MCF 10A (cell line): ENCODE measurements at regions of chr9 and their contacts with region 1.

Region 1: DNA sequence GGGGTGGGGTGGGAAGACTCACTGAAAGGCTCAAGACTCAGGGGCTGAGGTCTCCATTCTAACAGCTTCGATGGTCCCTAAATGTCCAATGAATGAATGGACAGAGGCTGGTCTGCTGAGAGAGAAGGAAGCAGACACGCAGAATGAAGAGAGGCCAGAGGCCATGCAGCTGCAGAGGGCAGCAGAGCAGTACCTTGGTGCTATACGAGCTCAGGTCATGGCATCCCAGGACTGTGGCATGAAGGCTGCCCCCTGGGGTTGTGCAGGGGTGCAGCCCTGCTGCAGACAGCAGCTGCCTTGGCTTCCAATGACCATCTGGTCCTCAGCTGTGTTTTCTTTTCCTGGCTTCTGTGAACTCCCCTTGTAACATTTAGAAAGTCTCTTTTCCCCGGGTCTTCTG is 15.2 kb upstream of the CORO2A start:
- DNase-seq: no peak
- H3K4me3 Mint-ChIP-seq: no peak overlapping the region
- H3K27ac Mint-ChIP-seq: peak overlapping the region; percentile 39
- H3K4me1 Mint-ChIP-seq: no peaks in the 10 kb centered on the region
- H3K27me3 Mint-ChIP-seq: no peaks in the 10 kb centered on the region
- CTCF ChIP-seq: no peak

Region 2: DNA sequence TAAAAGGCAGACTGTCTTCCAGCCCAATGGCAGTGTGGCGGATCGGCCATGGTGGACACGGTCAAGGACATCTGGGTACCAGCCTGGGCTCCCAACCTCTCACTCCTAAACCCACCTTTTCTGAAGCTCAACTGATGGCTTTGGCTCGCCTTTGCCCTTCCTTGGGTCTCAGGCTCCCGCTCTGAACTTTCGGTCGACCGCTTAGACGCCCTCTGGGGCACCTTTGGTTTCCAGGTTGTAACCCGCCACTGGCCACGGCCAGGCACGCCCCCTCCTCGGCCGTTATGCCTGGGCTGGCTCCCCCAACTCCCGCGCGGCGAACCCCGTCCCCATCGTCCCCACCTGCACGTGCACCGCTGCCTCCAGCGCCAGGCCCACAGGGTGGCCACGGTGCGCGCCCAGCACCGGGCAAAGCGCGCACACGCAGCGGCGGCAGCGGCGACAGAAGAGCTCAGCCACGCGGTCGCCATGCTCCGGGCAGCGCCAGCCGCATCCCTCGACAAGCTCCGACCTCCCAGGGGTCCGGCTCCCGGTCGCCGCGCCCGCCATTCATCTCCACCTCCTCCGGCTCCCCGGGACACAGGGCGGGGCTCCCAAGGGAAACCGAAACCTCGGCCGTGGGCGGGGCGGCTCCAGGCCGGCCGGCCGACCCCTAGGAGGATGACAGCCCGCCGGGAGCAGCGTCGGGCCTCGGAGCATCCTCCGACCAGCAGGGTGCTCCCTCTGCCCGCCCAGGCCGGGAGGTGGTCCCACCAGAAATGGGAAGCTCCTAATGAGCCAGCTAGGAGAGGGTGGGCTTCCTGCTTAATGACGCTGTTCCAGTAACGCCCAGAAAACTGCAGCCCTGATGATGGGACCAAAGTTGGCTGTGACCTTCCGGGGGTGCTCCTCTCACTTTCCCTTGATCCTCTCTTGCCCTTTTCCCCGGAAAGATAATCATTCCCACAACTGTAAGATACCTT is 88.7 kb before region 1 on chr9 and contains the start of gene TRIM14:
- CTCF ChIA-PET with region 1: interaction called, 16 read pairs
- POLR2A ChIA-PET with region 1: interaction called, 3 read pairs
- intact Hi-C with region 1: no loop called
- DNase-seq: peak; percentile 70
- H3K4me3 Mint-ChIP-seq: peak within 1 kb of the TSS; percentile 74
- H3K27ac Mint-ChIP-seq: peak within 1 kb of the TSS; percentile 34
- H3K4me1 Mint-ChIP-seq: peaks cover 22% of the 10 kb centered on the region
- H3K27me3 Mint-ChIP-seq: no peaks in the 10 kb centered on the region
- CTCF ChIP-seq: no peak
- total RNA-seq, gene TRIM14: 15.8 and 17.9 TPM in 2 replicates

Region 3: DNA sequence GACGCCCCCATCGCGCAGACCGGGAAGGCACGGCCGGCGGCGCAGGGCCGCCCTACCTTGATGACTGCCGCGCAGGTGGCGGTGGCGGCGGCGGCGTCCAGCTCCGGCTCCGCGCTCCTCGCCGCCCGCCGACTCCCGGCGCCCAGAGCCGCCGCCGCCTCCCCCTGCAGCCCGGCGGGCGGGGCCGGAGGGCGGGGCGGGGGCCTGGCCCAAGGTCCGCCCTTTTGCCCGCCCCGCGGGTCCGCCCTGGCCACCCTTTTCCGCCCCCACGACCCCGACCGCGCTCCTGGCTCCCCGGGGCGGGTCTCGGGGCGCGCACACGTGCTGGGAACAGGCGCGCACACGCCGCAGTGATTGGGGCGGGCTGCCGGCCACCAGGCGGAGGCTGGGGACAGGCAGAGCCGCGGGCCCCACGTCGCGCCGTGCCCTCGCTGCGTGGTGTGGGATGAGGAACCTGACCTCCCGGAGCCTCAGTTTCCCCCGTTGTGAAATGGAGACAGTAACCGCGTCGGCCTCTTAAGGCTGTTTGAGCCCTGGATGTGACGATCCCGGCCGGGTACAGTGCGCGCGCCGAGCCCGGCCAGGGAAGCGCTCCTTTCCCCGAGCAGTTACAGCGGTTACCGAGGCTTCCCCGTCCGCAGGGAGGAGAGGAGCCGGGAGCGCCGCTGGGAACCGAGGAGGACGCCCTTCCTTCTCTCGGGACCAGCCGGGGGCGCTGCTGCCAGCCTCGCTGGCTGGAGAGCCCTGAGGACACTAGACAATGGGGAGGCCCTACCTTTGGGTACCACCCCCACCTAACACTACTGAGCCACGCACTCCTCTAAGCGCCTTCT is 14.9 kb before region 1 on chr9 and contains the start of gene CORO2A:
- CTCF ChIA-PET with region 1: interaction called, 12 read pairs
- POLR2A ChIA-PET with region 1: interaction called, 3 read pairs
- intact Hi-C with region 1: no loop called
- DNase-seq: peak; percentile 80
- H3K4me3 Mint-ChIP-seq: peak within 1 kb of the TSS; percentile 77
- H3K27ac Mint-ChIP-seq: no peak within 1 kb of the TSS
- H3K4me1 Mint-ChIP-seq: peaks cover 6% of the 10 kb centered on the region
- H3K27me3 Mint-ChIP-seq: no peaks in the 10 kb centered on the region
- CTCF ChIP-seq: peak; percentile 17
- total RNA-seq, gene CORO2A: 3.4 and 3.9 TPM in 2 replicates

Region 4: GRCh38 chr9:98222885-98223640 is 15.5 kb after region 1 on chr9:
- CTCF ChIA-PET with region 1: interaction called, 13 read pairs
- POLR2A ChIA-PET with region 1: interaction called, 7 read pairs
- intact Hi-C with region 1: no loop called
- DNase-seq: peak; percentile 99
- H3K4me3 Mint-ChIP-seq: peak overlapping the region; percentile 4
- H3K27ac Mint-ChIP-seq: peak overlapping the region; percentile 77
- H3K4me1 Mint-ChIP-seq: peaks cover 26% of the 10 kb centered on the region
- H3K27me3 Mint-ChIP-seq: no peaks in the 10 kb centered on the region
- CTCF ChIP-seq: no peak

Region 5: DNA sequence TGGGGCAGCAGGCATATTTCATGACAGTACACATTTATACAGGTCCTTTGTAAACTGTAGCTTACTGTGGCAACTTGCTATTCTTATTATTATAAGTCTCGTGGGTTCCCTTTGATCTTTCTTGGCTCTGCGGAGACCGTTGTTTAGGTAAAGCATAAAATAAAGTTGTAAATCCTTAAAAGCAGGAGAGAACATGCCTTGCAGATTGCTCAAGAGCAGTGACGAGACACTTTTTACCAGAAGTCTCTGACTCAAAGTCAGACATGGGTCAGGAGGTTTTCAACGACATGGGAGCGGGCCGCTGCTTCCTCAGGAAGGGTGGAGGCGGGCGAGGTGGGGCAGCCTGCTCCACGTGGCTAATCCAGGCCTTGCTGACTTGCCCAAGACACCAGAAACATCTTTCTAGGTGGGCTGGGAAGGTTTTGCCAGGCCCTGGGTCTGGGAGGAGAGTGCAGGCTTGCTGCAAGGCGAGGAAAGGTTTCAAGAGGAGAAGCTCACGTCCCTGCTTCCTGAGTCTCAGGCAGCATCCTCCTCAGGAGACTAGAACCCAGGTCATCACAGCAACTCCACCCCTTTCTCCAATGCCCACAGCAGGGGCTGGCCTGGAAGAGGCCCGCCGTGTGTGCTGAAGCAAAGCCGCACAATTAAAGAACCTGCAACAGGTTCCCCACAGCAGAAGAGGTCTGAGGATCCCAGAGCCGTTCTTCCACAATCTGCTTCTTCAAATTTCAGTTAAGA is 41.3 kb after region 1 on chr9:
- CTCF ChIA-PET with region 1: interaction called, 15 read pairs
- POLR2A ChIA-PET with region 1: interaction called, 5 read pairs
- intact Hi-C with region 1: no loop called
- DNase-seq: peak; percentile 99
- H3K4me3 Mint-ChIP-seq: peak overlapping the region; percentile 24
- H3K27ac Mint-ChIP-seq: peak overlapping the region; percentile 85
- H3K4me1 Mint-ChIP-seq: peaks cover 78% of the 10 kb centered on the region
- H3K27me3 Mint-ChIP-seq: no peaks in the 10 kb centered on the region
- CTCF ChIP-seq: no peak

Region 6: DNA sequence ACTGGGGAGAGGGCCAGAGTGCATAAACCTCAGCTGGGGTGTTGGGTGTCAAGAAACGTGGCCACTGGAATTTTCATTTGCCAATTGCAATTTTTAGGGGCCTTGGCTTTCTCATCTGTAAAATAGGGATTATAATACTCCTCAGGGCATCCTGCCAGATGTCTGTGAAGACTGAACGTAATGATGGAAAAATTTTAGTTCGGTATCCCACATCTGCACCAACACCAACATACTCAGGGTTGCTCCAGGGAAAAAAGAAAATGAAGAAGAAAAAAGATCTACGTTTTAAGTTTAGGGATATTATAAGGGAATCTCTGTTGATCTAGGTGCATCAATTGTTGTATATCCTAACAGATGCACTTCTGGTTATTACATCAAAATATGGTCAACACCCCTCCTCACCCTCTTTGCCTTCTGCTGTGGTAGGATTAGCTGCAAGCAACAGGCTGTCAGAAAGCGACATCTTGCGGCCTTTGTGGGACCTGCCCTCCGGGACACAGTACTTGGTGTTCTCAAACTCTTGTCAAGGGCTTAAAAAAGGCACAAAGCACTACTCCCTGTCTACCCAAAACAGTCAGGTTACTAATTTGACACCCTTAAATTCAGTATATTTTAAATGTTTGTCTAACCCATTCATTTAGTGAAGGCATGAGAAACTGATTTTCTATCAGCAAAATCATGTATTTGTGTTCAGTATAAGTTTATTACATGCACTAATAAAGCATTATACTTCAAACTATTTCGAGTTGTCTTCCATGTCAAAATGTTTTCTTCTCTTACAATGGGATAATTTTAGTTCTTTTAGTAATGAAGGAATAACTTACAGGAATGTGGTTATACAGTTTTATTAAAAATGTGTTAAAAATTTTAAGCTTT is 56.1 kb after region 1 on chr9:
- CTCF ChIA-PET with region 1: interaction called, 61 read pairs
- POLR2A ChIA-PET with region 1: no interaction called
- intact Hi-C with region 1: loop called (anchors 1 kb)
- DNase-seq: peak; percentile 83
- H3K4me3 Mint-ChIP-seq: no peak overlapping the region
- H3K27ac Mint-ChIP-seq: no peak overlapping the region
- H3K4me1 Mint-ChIP-seq: peaks cover 14% of the 10 kb centered on the region
- H3K27me3 Mint-ChIP-seq: no peaks in the 10 kb centered on the region
- CTCF ChIP-seq: peak; percentile 96